PC-9 (cell line): ENCODE measurements at regions of chr7 and their contacts with region 1.

Region 1: DNA sequence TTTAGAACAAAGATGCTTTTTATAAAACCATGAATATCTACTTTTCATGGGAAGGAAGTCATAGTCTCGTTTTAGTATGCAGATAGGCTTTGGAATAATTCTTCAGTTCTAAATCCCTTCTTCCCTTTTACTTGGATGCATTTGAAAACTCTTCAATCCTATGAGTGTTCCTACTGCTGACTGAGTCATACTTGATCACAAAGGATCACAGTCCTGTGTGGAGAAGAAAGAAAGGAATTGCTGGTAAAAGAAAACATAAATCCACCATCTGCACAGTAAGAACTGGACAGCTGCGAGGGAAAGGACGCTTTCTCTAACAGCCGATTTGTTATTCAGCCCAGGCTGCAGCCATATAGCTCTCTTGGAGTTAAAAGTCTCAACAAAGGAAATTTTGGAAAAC is 209.9 kb downstream of the SEMA3E start:
- DNase-seq: no peak
- H3K4me3 ChIP-seq: no peak overlapping the region
- H3K27ac ChIP-seq: no peak overlapping the region
- H3K4me1 ChIP-seq: no peaks in the 10 kb centered on the region
- H3K27me3 ChIP-seq: no peaks in the 10 kb centered on the region
- CTCF ChIP-seq: no peak

Region 2: GRCh38 chr7:82481499-82482097 is 957.4 kb before region 1 on chr7:
- CTCF ChIA-PET with region 1: no interaction called
- POLR2A ChIA-PET with region 1: no interaction called
- intact Hi-C with region 1: no loop called
- DNase-seq: no peak
- H3K4me3 ChIP-seq: no peak overlapping the region
- H3K27ac ChIP-seq: no peak overlapping the region
- H3K4me1 ChIP-seq: no peaks in the 10 kb centered on the region
- H3K27me3 ChIP-seq: no peaks in the 10 kb centered on the region
- CTCF ChIP-seq: peak; percentile 88

Region 3: DNA sequence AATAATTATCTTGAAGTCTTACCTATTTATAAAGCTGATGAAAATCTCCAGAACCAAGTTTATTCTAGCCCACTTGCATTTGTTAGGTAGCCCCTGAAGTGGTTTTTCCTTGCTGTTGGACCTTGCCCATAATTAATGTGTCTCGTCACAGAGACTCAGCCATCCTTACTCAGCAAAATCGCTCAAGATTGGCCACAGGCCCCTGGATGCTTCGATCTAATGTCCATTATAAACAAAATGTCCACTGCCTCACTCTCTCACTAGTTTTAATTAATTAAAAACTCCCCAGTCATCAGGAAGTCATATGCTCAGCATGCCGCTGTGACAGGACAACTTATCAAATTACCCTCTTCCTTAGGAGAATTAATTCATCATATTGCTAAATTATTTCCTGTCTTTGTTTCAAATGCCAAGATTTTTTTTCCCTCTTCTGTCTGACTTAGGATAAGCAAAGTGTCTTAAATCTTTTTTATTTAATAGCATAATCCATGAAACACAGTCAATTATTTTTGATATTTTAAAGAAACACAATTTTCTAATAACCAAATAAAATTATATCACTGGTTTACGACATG is 149.5 kb before region 1 on chr7:
- CTCF ChIA-PET with region 1: no interaction called
- POLR2A ChIA-PET with region 1: no interaction called
- intact Hi-C with region 1: no loop called
- DNase-seq: no peak
- H3K4me3 ChIP-seq: no peak overlapping the region
- H3K27ac ChIP-seq: no peak overlapping the region
- H3K4me1 ChIP-seq: no peaks in the 10 kb centered on the region
- H3K27me3 ChIP-seq: no peaks in the 10 kb centered on the region
- CTCF ChIP-seq: no peak

Region 4: DNA sequence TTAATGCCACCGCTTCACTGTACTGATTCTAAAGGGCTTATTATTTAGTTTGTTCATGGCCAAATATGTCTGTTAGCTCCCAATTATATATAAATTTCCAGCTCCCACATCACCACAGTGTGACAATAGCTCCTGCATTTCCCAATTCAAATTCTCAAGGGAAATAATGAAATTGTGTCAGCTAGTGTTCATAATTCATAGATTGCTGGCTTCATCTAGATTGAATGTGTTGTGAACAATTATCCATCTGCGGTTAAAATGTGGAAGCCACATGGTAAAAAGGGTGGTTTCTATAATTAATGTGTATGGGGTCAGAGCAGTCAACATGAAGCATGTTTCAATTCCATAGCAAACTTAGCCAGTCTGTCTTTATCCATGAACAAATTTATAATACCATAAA is 55.7 kb after region 1 on chr7:
- CTCF ChIA-PET with region 1: no interaction called
- POLR2A ChIA-PET with region 1: no interaction called
- intact Hi-C with region 1: no loop called
- DNase-seq: no peak
- H3K4me3 ChIP-seq: no peak overlapping the region
- H3K27ac ChIP-seq: no peak overlapping the region
- H3K4me1 ChIP-seq: no peaks in the 10 kb centered on the region
- H3K27me3 ChIP-seq: no peaks in the 10 kb centered on the region
- CTCF ChIP-seq: no peak

Region 5: GRCh38 chr7:83782628-83783027 is 343.6 kb after region 1 on chr7:
- CTCF ChIA-PET with region 1: no interaction called
- POLR2A ChIA-PET with region 1: no interaction called
- intact Hi-C with region 1: no loop called
- DNase-seq: no peak
- H3K4me3 ChIP-seq: no peak overlapping the region
- H3K27ac ChIP-seq: no peak overlapping the region
- H3K4me1 ChIP-seq: no peaks in the 10 kb centered on the region
- H3K27me3 ChIP-seq: no peaks in the 10 kb centered on the region
- CTCF ChIP-seq: no peak

Region 6: GRCh38 chr7:84364708-84365107 is 925.7 kb after region 1 on chr7:
- CTCF ChIA-PET with region 1: no interaction called
- POLR2A ChIA-PET with region 1: interaction called, 21 read pairs
- intact Hi-C with region 1: no loop called
- DNase-seq: no peak
- H3K4me3 ChIP-seq: no peak overlapping the region
- H3K27ac ChIP-seq: no peak overlapping the region
- H3K4me1 ChIP-seq: no peaks in the 10 kb centered on the region
- H3K27me3 ChIP-seq: no peaks in the 10 kb centered on the region
- CTCF ChIP-seq: no peak